ENCODE measurements at regions of chr6 and their contacts with region 1.

Region 1: GRCh38 chr6:43702534-43703440 is 15.2 kb upstream of the MRPS18A start:
- DNase-seq: peak; percentile 62
- H3K4me3 ChIP-seq: no peak overlapping the region
- H3K27ac ChIP-seq: no peak overlapping the region
- H3K4me1 ChIP-seq: peaks cover 59% of the 10 kb centered on the region
- CTCF ChIP-seq: no peak

Region 2: DNA sequence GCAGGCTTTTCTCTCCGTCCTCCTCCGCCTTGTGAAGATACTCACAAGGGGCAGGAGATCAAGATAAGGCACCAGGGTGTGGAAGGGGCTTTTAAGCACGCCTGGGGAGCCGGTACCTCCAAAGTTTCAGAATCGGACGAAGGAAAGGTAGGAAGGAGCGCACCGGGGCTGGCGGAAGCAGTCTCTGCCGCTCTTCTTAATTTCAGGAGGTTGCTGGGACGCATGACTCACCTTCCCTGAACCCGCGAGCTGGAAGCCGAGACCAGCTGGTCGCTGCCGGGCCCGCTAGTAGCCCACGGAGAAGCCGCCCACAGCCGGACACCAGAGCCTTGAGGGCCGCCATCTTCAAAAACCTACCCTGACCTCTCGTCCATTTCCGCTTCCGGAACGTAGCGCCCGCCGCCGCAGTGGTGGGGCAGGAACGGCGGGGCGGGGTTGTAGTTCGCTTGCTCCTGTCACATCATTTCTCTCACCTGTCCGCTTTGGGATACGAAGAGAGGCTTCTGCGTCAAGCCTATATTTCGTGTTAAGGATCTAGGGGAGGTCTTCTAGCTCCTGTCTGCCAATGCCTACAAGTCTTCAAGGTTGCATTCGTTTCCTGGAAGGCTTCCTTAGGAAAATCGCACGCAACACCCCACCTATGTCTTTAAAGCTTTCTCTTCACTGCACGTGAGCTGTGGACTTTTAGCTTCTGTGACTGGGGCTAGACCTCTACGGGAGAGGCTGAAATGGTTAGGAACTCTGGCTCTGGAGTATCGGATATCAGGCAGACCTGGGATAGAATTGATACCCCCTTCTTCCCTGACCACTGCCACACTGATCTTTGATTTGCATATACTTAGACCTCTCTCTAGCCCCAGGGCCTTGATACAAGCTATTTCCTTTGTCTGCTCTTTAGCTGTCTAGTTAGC is 15.1 kb before region 1 on chr6 and contains the start of gene MRPS18A:
- CTCF ChIA-PET with region 1: interaction called, 3 read pairs
- POLR2A ChIA-PET with region 1: interaction called, 44 read pairs
- intact Hi-C with region 1: loop called (anchors 1 kb)
- DNase-seq: peak; percentile 81
- H3K4me3 ChIP-seq: peak within 1 kb of the TSS; percentile 98
- H3K27ac ChIP-seq: peak within 1 kb of the TSS; percentile 38
- H3K4me1 ChIP-seq: peaks cover 42% of the 10 kb centered on the region
- CTCF ChIP-seq: no peak
- total RNA-seq, gene MRPS18A: 57.3 and 86.1 TPM in 2 replicates

Region 3: GRCh38 chr6:44221291-44221960 is 518.6 kb after region 1 on chr6:
- CTCF ChIA-PET with region 1: no interaction called
- POLR2A ChIA-PET with region 1: no interaction called
- intact Hi-C with region 1: loop called (anchors 10 kb)
- DNase-seq: peak; percentile 85
- H3K4me3 ChIP-seq: no peak overlapping the region
- H3K27ac ChIP-seq: peak overlapping the region; percentile 56
- H3K4me1 ChIP-seq: peaks cover 82% of the 10 kb centered on the region
- CTCF ChIP-seq: peak; percentile 81